T-cell (primary cell): ENCODE measurements at regions of chr3 and their contacts with region 1.

Region 1: GRCh38 chr3:37297459-37297858 is 123.1 kb upstream of the LRRFIP2 start:
- DNase-seq: no peak
- ATAC-seq: no peak
- H3K4me3 ChIP-seq: no peak overlapping the region
- H3K4me3 Mint-ChIP-seq: no peak overlapping the region
- H3K27ac ChIP-seq: no peak overlapping the region
- H3K27ac Mint-ChIP-seq: no peak overlapping the region
- H3K4me1 ChIP-seq: no peaks in the 10 kb centered on the region
- H3K4me1 Mint-ChIP-seq: peaks cover 2 to 14% (median 7%) of the 10 kb centered on the region in 3 donors
- H3K27me3 ChIP-seq: no peaks in the 10 kb centered on the region
- H3K27me3 Mint-ChIP-seq: no peaks in the 10 kb centered on the region

Region 2: GRCh38 chr3:37223141-37223558 is 74.3 kb before region 1 on chr3:
- CTCF ChIA-PET with region 1: no interaction called
- POLR2A ChIA-PET with region 1: no interaction called
- DNase-seq: no peak
- ATAC-seq: peak in 2 of 4 experiments; percentile 19 to 20
- H3K4me3 ChIP-seq: no peak overlapping the region
- H3K4me3 Mint-ChIP-seq: no peak overlapping the region
- H3K27ac ChIP-seq: no peak overlapping the region
- H3K27ac Mint-ChIP-seq: no peak overlapping the region
- H3K4me1 ChIP-seq: peaks cover 11 to 37% of the 10 kb centered on the region in 2 experiments
- H3K4me1 Mint-ChIP-seq: peaks cover 13 to 52% (median 32%) of the 10 kb centered on the region in 3 donors
- H3K27me3 ChIP-seq: no peaks in the 10 kb centered on the region
- H3K27me3 Mint-ChIP-seq: no peaks in the 10 kb centered on the region

Region 3: DNA sequence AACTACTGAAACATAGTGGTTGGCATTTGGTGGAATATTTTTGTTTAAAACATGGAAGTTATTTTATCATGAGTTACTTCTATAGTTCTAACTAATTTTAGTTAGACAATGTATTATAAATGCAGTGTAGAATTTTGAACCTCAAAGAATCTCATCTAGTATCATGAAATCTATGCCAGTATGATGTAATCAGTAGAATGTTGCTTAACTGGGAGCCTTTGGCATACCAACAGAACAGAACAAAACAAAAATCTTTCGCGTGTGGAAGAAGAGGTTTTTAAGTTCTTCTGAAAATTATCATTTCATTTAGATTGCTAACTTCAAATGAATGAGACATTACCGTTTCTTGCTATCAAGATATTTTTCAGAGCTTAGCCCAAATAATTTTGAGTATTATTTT is 24.7 kb before region 1 on chr3:
- CTCF ChIA-PET with region 1: no interaction called
- POLR2A ChIA-PET with region 1: interaction called, 3 to 17 read pairs
- DNase-seq: no peak
- ATAC-seq: no peak
- H3K4me3 ChIP-seq: no peak overlapping the region
- H3K4me3 Mint-ChIP-seq: no peak overlapping the region
- H3K27ac ChIP-seq: no peak overlapping the region
- H3K27ac Mint-ChIP-seq: no peak overlapping the region
- H3K4me1 ChIP-seq: no peaks in the 10 kb centered on the region
- H3K4me1 Mint-ChIP-seq: peaks cover 25 to 34% (median 30%) of the 10 kb centered on the region in 3 donors
- H3K27me3 ChIP-seq: no peaks in the 10 kb centered on the region
- H3K27me3 Mint-ChIP-seq: no peaks in the 10 kb centered on the region